CD8-positive, alpha-beta T cell (primary cell): ENCODE measurements at regions of chr7 and their contacts with region 1.

Region 1: GRCh38 chr7:142788303-142789289 is 17.8 kb downstream of the PRSS2 start:
- DNase-seq: peak in 3 of 9 experiments; percentile 23 to 70 (median 33)
- ATAC-seq: no peak
- H3K4me3 ChIP-seq: peak overlapping the region; percentile 70 to 91
- H3K4me3 Mint-ChIP-seq: peak overlapping the region; percentile 98
- H3K27ac ChIP-seq: peak overlapping the region; percentile 98 to 99
- H3K27ac Mint-ChIP-seq: peak overlapping the region; percentile 99
- H3K4me1 ChIP-seq: peaks cover 30% of the 10 kb centered on the region
- H3K4me1 Mint-ChIP-seq: peaks cover 31% of the 10 kb centered on the region
- H3K27me3 ChIP-seq: no peaks in the 10 kb centered on the region
- H3K27me3 Mint-ChIP-seq: no peaks in the 10 kb centered on the region
- CTCF ChIP-seq: no peak

Region 2: GRCh38 chr7:141992156-141992555 is 796.4 kb before region 1 on chr7:
- CTCF ChIA-PET with region 1: no interaction called
- POLR2A ChIA-PET with region 1: no interaction called
- intact Hi-C with region 1: no loop called
- DNase-seq: no peak
- ATAC-seq: no peak
- H3K4me3 ChIP-seq: no peak overlapping the region
- H3K4me3 Mint-ChIP-seq: no peak overlapping the region
- H3K27ac ChIP-seq: no peak overlapping the region
- H3K27ac Mint-ChIP-seq: no peak overlapping the region
- H3K4me1 ChIP-seq: no peaks in the 10 kb centered on the region
- H3K4me1 Mint-ChIP-seq: peaks cover 2% of the 10 kb centered on the region
- H3K27me3 ChIP-seq: no peaks in the 10 kb centered on the region
- H3K27me3 Mint-ChIP-seq: peaks cover 11% of the 10 kb centered on the region
- CTCF ChIP-seq: no peak

Region 3: GRCh38 chr7:142313528-142313927 is 475.1 kb before region 1 on chr7:
- CTCF ChIA-PET with region 1: no interaction called
- POLR2A ChIA-PET with region 1: interaction called, 19 read pairs
- intact Hi-C with region 1: no loop called
- DNase-seq: peak in 8 of 9 experiments; percentile 18 to 73 (median 44)
- ATAC-seq: peak; percentile 89
- H3K4me3 ChIP-seq: peak overlapping the region in 1 of 2 experiments; percentile 20
- H3K4me3 Mint-ChIP-seq: peak overlapping the region; percentile 62
- H3K27ac ChIP-seq: no peak overlapping the region
- H3K27ac Mint-ChIP-seq: peak overlapping the region; percentile 38
- H3K4me1 ChIP-seq: peaks cover 20% of the 10 kb centered on the region
- H3K4me1 Mint-ChIP-seq: peaks cover 19% of the 10 kb centered on the region
- H3K27me3 ChIP-seq: no peaks in the 10 kb centered on the region
- H3K27me3 Mint-ChIP-seq: peaks cover 4% of the 10 kb centered on the region
- CTCF ChIP-seq: no peak

Region 4: DNA sequence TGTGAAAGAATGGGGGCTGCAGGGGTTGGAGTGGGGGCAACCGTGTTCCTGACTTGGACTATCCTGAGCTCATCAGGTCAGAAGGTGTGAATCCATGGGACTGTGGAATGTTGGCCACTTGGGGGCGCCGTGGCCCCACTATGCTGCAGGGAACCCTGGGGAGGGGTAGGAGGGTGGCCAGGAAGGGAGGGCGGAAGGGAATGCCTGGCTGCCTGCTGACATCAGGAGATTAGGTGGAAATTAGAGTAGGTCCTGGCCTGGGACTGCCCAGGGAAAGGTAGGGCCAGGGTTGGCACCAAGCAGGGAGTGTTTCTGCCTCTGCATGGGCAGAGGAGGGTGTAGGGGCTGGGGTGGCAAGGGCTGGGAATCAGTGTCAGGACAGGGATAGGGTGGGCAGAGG is 464.9 kb before region 1 on chr7:
- CTCF ChIA-PET with region 1: no interaction called
- POLR2A ChIA-PET with region 1: interaction called, 10 read pairs
- intact Hi-C with region 1: no loop called
- DNase-seq: peak in 5 of 9 experiments; percentile 49 to 65 (median 52)
- ATAC-seq: peak; percentile 47
- H3K4me3 ChIP-seq: no peak overlapping the region
- H3K4me3 Mint-ChIP-seq: no peak overlapping the region
- H3K27ac ChIP-seq: no peak overlapping the region
- H3K27ac Mint-ChIP-seq: peak overlapping the region; percentile 86
- H3K4me1 ChIP-seq: peaks cover 8% of the 10 kb centered on the region
- H3K4me1 Mint-ChIP-seq: peaks cover 27% of the 10 kb centered on the region
- H3K27me3 ChIP-seq: no peaks in the 10 kb centered on the region
- H3K27me3 Mint-ChIP-seq: peaks cover 7% of the 10 kb centered on the region
- CTCF ChIP-seq: peak; percentile 51